H1 (cell line): ENCODE measurements at regions of chr3 and their contacts with region 1.

Region 1: DNA sequence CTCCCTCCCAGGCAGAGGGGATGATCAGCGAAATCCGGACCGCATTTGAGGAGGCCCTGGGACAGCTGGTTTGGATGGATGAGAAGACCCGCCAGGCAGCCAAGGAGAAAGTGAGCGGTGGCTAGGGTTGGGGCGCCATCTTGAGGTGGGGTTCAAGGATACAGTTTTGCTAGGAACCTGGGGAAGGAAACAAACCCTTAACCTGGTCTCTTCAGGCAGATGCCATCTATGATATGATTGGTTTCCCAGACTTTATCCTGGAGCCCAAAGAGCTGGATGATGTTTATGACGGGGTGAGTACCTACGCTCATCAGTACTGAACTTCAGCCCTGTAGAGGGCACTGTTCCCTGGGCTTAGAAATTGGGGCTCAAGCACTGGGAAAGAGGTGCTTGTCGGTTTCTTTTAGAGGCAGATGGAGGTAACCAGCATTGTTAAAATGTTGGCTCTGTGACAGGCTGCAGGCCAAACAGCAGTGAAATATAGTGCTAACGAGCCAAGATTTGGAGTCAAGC is 9.6 kb upstream of the PSMD2 start:
- DNase-seq: peak; percentile 57 to 91
- H3K4me3 ChIP-seq: no peak overlapping the region
- H3K27ac ChIP-seq: no peak overlapping the region
- H3K4me1 ChIP-seq: peaks cover 0 to 2% (median 0%) of the 10 kb centered on the region in 4 experiments; a peak in 2 of 7 replicates
- H3K27me3 ChIP-seq: no peaks in the 10 kb centered on the region
- CTCF ChIP-seq: peak; percentile 63 to 82 (median 78)
- EP300 ChIP-seq: no peak
- POLR2A ChIP-seq: no peak
- RAD21 ChIP-seq: peak; percentile 94 to 96

Region 2: GRCh38 chr3:184241447-184242296 is 47.8 kb before region 1 on chr3:
- CTCF ChIA-PET with region 1: interaction called, 14 read pairs
- POLR2A ChIA-PET with region 1: interaction called, 4 read pairs
- DNase-seq: peak in 1 of 2 experiments; percentile 57
- H3K4me3 ChIP-seq: peak overlapping the region in 3 of 4 experiments; percentile 26 to 54 (median 42); a peak in 6 of 8 replicates
- H3K27ac ChIP-seq: no peak overlapping the region
- H3K4me1 ChIP-seq: peaks cover 0 to 5% (median 1%) of the 10 kb centered on the region in 4 experiments; a peak in 3 of 7 replicates
- H3K27me3 ChIP-seq: no peaks in the 10 kb centered on the region; a peak in 2 of 7 replicates
- CTCF ChIP-seq: peak in 2 of 3 experiments; percentile 41 to 56; a peak in 3 of 4 replicates
- EP300 ChIP-seq: no peak
- POLR2A ChIP-seq: no peak
- RAD21 ChIP-seq: peak; percentile 45 to 65

Region 3: DNA sequence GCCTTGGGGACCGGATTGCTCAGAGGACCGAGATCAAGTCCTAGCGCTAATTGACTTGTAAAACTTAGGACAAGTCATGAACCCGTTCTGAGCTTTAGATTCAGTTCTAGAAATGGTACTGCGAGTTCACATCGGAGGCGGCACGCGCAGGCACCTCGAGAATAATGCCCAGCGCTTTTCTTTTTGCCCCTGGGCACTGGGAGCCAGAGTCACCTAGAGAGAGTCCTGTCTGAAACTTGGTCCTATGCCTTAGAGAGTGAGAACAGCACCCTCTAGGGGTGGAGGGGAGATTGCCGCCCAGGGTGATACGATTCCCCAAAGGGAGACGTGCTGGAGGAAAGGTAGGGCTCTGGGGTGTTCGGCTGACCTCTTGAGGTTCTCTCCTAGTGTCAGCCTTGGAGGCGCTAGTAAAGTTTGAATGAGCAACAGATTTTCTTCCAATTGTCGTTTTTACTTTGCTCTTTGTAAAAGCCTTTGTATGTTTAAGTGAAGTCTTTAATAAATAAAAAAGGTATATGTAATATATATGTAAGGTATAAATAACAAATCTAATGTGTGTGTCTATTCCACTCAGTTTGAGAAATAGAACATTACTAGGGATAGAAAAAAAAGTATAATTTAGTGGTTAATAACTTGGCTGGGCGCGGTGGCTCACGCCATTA is 39.2 kb before region 1 on chr3:
- CTCF ChIA-PET with region 1: interaction called, 23 read pairs
- POLR2A ChIA-PET with region 1: interaction called, 3 read pairs
- DNase-seq: peak; percentile 94 to 98
- H3K4me3 ChIP-seq: peak overlapping the region; percentile 71 to 89 (median 82)
- H3K27ac ChIP-seq: no peak overlapping the region
- H3K4me1 ChIP-seq: no peaks in the 10 kb centered on the region
- H3K27me3 ChIP-seq: no peaks in the 10 kb centered on the region; a peak in 1 of 7 replicates
- CTCF ChIP-seq: peak; percentile 90 to 97 (median 91)
- EP300 ChIP-seq: no peak
- POLR2A ChIP-seq: no peak
- RAD21 ChIP-seq: peak; percentile 53 to 72

Region 4: GRCh38 chr3:184275961-184276910 is 13.2 kb before region 1 on chr3 and contains the start of gene ECE2:
- CTCF ChIA-PET with region 1: interaction called, 18 read pairs
- POLR2A ChIA-PET with region 1: no interaction called
- DNase-seq: peak in 1 of 2 experiments; percentile 58
- H3K4me3 ChIP-seq: peak within 1 kb of the TSS; percentile 31 to 60 (median 42)
- H3K27ac ChIP-seq: no peak within 1 kb of the TSS
- H3K4me1 ChIP-seq: peaks cover 0 to 7% (median 3%) of the 10 kb centered on the region in 4 experiments; a peak in 5 of 7 replicates
- H3K27me3 ChIP-seq: peaks cover 8 to 32% (median 26%) of the 10 kb centered on the region in 4 experiments
- CTCF ChIP-seq: no peak
- EP300 ChIP-seq: no peak
- POLR2A ChIP-seq: no peak
- RAD21 ChIP-seq: no peak
- total RNA-seq, gene ECE2: 0.48 and 0.86 TPM in 2 replicates

Region 5: DNA sequence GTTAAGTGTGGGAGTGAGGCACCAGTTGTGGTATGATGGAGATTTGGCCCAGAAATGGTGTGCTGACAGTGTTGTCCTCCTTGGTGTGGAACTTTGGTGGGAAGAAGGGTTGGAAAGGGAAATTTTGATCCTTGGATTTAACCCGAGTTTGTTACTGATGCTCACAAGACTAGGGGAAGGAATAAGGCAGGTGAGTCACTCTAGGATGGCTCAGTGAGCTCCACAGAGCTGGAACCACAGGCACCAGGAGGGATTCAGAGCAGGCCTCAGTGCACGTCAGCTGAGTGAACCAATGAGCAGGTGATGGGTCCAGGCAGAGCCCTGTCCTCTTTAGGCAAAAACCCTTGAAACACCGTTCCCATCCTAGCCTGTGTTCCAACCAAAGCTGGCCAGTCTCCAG is 101.8 kb after region 1 on chr3:
- CTCF ChIA-PET with region 1: no interaction called
- POLR2A ChIA-PET with region 1: no interaction called
- DNase-seq: no peak
- H3K4me3 ChIP-seq: no peak overlapping the region
- H3K27ac ChIP-seq: no peak overlapping the region
- H3K4me1 ChIP-seq: peaks cover 0 to 3% (median 0%) of the 10 kb centered on the region in 4 experiments; a peak in 2 of 7 replicates
- H3K27me3 ChIP-seq: no peaks in the 10 kb centered on the region; a peak in 3 of 7 replicates
- CTCF ChIP-seq: no peak
- EP300 ChIP-seq: no peak
- POLR2A ChIP-seq: no peak
- RAD21 ChIP-seq: no peak